A549 (cell line): ENCODE measurements at regions of chr5 and their contacts with region 1.

Region 1: DNA sequence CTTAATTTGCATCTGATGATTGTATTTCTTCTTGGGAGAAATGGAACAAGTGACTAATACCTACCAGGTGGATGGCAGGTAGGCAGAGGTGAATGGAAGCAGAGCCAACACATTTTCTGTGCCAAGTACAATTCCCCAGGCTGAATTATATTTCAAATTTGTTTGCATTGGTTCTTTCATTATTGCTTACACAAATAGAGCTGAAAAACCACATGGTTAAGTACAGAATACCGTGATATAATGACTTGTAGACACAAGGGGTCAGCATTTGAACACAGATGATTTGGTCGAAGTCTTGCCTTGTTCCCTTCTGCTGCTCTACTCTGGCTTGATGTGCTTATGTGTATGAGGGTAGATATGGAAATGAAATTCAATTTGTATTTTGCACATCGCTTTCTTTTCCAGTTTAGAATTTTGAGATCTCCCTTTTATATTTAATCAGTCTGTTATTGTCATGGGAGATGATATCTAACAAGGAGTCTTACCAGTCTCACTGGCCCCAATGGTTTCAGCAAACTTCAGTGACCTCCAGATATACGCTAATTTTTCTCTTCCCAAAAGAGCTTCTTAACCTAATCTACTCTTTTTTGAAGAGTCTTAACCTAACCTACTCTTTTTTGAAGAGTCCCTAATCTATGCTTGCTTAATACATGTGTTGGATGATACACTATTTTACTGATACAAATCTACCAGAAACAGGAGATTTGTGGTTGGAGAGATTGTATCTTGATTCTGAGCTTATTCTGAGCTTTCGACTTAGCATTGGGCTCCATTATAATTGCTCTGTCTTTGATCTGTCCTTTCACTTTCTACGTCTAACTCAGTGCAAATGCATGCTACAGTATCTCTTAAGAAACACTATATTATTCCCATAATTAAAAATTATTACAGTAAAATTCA is 88.1 kb downstream of the PCSK1 start:
- DNase-seq: peak; percentile 47 to 80
- ATAC-seq: peak; percentile 95 to 98
- H3K4me3 ChIP-seq: no peak overlapping the region
- H3K27ac ChIP-seq: peak overlapping the region; percentile 39 to 77
- H3K4me1 ChIP-seq: peaks cover 22% of the 10 kb centered on the region
- CTCF ChIP-seq: peak; percentile 94
- EP300 ChIP-seq: no peak
- POLR2A ChIP-seq: no peak
- RAD21 ChIP-seq: peak; percentile 92 to 97

Region 2: DNA sequence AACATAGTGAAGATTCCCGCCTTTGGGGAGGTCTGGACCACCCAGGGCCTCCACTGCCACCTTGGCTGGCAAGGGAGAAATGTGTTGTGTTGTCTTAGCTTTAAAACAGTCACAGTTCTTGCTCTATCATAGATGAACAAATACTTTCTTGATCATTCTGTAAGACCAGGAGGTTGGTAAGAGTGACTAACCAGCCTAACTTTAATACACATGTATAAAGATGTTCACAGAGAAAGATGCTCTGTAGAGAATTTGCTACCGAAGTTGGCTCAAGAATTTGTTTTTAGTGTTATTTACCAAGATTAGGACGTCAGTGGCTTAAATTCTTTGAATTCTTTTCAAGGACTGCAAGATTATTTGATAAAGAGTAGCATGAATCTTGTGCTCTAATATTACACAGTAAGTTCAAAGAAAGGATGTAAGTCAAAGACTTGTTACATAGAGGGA is 550.8 kb before region 1 on chr5:
- CTCF ChIA-PET with region 1: no interaction called
- POLR2A ChIA-PET with region 1: no interaction called
- DNase-seq: peak; percentile 8 to 76
- ATAC-seq: peak; percentile 86 to 92
- H3K4me3 ChIP-seq: no peak overlapping the region
- H3K27ac ChIP-seq: peak overlapping the region; percentile 79 to 83
- H3K4me1 ChIP-seq: peaks cover 70% of the 10 kb centered on the region
- CTCF ChIP-seq: no peak
- EP300 ChIP-seq: peak; percentile 69 to 83; a peak in 4 of 5 replicates
- POLR2A ChIP-seq: no peak
- RAD21 ChIP-seq: no peak; a peak in 1 of 5 replicates

Region 3: DNA sequence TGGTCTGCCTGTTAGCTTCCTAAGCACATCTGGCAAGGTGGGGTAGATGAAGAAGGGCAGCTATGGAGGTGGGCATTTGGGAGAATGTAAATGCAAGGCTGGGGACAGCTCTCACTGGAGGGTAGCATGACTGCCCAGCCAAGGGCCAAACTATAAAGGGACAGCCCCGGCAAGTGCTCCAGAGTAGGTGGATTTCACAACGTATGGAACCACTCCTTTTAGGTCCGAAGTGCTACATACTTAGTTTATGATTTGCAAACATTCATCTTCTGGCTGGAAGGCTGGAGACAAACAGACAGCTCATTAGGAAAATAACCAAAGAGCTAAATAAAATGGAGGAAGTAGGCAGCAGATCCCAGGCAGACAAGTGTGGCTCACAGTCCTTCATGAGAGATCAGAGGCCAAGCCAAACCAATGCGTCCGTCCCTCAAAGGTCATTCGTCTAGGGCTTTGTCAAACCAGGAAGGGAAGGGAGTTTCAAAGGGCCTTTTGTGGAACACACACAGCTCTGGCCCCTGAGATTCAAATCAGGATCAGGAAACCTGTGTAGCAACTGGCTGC is 479.9 kb before region 1 on chr5:
- CTCF ChIA-PET with region 1: interaction called, 127 read pairs
- POLR2A ChIA-PET with region 1: no interaction called
- DNase-seq: no peak
- ATAC-seq: no peak
- H3K4me3 ChIP-seq: no peak overlapping the region
- H3K27ac ChIP-seq: peak overlapping the region in 1 of 2 experiments; percentile 44; a peak in 1 of 6 replicates
- H3K4me1 ChIP-seq: peaks cover 48% of the 10 kb centered on the region
- CTCF ChIP-seq: no peak
- EP300 ChIP-seq: no peak
- POLR2A ChIP-seq: no peak
- RAD21 ChIP-seq: no peak

Region 4: DNA sequence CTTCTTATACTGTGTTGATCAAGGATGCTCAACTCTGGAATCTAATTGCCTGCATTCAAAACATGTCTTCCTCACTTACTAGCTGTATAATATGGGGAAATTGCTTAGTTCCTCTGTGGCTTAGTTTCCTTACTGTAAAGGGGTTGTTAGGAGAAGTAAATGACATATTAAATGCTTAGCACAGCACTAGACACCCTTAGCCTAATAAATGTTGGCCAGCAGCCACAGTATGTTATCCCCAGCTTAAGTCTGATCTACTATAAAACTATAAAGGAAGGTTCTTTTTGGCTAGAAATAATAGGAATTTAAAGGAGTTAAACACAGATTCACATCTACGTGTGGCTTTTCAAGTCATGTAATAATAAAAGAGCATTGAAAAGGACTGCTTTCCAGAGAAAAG is 144.3 kb before region 1 on chr5:
- CTCF ChIA-PET with region 1: no interaction called
- POLR2A ChIA-PET with region 1: no interaction called
- DNase-seq: no peak
- ATAC-seq: peak in 1 of 2 experiments; percentile 25; a peak in 2 of 6 replicates
- H3K4me3 ChIP-seq: no peak overlapping the region
- H3K27ac ChIP-seq: peak overlapping the region; percentile 73 to 81
- H3K4me1 ChIP-seq: peaks cover 35% of the 10 kb centered on the region
- CTCF ChIP-seq: no peak
- EP300 ChIP-seq: no peak
- POLR2A ChIP-seq: no peak
- RAD21 ChIP-seq: no peak

Region 5: DNA sequence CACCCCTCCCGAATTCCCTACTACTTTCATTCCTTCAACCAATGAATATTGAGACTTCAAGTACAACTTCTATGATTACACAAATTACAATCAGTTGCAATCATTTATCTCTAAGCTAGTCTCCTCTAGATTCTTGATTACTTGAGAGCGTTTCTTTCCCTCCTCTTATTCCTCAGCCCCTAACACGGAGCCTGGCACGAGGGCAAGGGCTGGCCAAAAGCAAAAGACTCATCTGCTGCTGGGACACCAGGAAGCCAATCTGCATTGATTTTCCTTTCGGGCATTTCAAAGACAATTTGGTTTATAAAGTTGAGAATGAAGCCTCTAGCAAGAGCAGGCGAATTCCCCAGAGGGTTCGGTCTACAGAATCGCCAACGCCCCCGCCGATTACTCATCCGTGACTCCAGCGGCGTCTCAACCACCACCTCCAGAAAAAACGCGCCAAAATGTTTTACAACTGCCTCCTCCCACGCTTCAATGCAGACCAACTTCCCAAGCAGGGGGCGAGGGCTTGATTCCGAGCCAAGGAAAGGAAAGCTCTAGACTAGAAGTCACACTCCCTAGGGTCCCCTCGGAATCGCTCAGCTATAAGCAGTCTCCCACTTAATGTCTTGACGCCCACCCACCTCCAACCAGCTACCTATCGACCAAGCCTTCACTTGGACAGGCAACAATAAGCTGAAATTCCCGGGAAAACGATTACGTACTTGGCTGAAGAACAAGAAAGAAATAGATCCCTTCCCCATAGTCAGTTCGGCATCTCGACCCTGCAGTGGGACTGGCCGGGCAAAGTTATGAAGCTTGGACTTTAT is 86.7 kb after region 1 on chr5:
- CTCF ChIA-PET with region 1: interaction called, 12 read pairs
- POLR2A ChIA-PET with region 1: no interaction called
- DNase-seq: no peak
- ATAC-seq: no peak
- H3K4me3 ChIP-seq: no peak overlapping the region
- H3K27ac ChIP-seq: no peak overlapping the region
- H3K4me1 ChIP-seq: peaks cover 9% of the 10 kb centered on the region
- CTCF ChIP-seq: no peak
- EP300 ChIP-seq: no peak
- POLR2A ChIP-seq: no peak
- RAD21 ChIP-seq: no peak

Region 6: GRCh38 chr5:96509721-96510333 is 164.9 kb after region 1 on chr5:
- CTCF ChIA-PET with region 1: interaction called, 10 read pairs
- POLR2A ChIA-PET with region 1: interaction called, 5 read pairs
- DNase-seq: peak; percentile 87 to 90
- ATAC-seq: peak; percentile 90 to 92
- H3K4me3 ChIP-seq: no peak overlapping the region
- H3K27ac ChIP-seq: peak overlapping the region; percentile 92 to 98
- H3K4me1 ChIP-seq: peaks cover 45% of the 10 kb centered on the region
- CTCF ChIP-seq: no peak
- EP300 ChIP-seq: peak; percentile 97 to 98
- POLR2A ChIP-seq: no peak
- RAD21 ChIP-seq: peak in 1 of 2 experiments; percentile 68; a peak in 3 of 5 replicates

Region 7: DNA sequence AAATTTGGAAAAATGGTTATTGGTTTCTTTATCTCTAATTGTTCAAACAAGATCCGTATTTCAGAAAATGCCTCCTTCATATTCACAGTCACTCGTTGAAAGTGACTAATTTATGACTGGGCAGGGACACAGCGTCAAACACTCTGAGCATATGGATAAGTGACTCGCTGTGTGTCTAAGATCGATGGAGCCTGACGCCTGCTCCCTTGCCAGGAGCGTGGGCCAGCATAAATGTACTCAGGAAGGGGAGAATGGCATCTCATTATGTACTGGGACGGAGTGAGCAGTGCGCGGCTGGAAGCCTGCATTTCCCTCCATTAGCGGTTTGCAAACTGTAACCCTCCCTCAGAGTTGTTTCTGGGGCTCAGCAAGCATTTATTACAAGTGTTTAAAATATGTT is 237.4 kb after region 1 on chr5:
- CTCF ChIA-PET with region 1: interaction called, 18 read pairs
- POLR2A ChIA-PET with region 1: no interaction called
- DNase-seq: no peak
- ATAC-seq: no peak; a peak in 1 of 6 replicates
- H3K4me3 ChIP-seq: no peak overlapping the region
- H3K27ac ChIP-seq: peak overlapping the region in 1 of 2 experiments; percentile 65; a peak in 1 of 6 replicates
- H3K4me1 ChIP-seq: peaks cover 14% of the 10 kb centered on the region; the same call in 1 of the 3 replicates
- CTCF ChIP-seq: no peak
- EP300 ChIP-seq: no peak
- POLR2A ChIP-seq: no peak
- RAD21 ChIP-seq: no peak

Region 8: GRCh38 chr5:96687812-96688453 is 343.0 kb after region 1 on chr5:
- CTCF ChIA-PET with region 1: interaction called, 19 read pairs
- POLR2A ChIA-PET with region 1: no interaction called
- DNase-seq: peak; percentile 72 to 79
- ATAC-seq: peak; percentile 88 to 95
- H3K4me3 ChIP-seq: peak overlapping the region; percentile 11; the same call in 1 of the 3 replicates
- H3K27ac ChIP-seq: peak overlapping the region in 1 of 2 experiments; percentile 47; a peak in 1 of 6 replicates
- H3K4me1 ChIP-seq: peaks cover 44% of the 10 kb centered on the region; the same call in 2 of the 3 replicates
- CTCF ChIP-seq: peak; percentile 79
- EP300 ChIP-seq: no peak
- POLR2A ChIP-seq: no peak
- RAD21 ChIP-seq: peak; percentile 85 to 88

Region 9: GRCh38 chr5:96734871-96735325 is 390.0 kb after region 1 on chr5:
- CTCF ChIA-PET with region 1: interaction called, 12 read pairs
- POLR2A ChIA-PET with region 1: no interaction called
- DNase-seq: no peak
- ATAC-seq: peak in 1 of 2 experiments; percentile 24; a peak in 1 of 6 replicates
- H3K4me3 ChIP-seq: no peak overlapping the region
- H3K27ac ChIP-seq: no peak overlapping the region
- H3K4me1 ChIP-seq: peaks cover 12% of the 10 kb centered on the region; the same call in 1 of the 3 replicates
- CTCF ChIP-seq: no peak
- EP300 ChIP-seq: no peak
- POLR2A ChIP-seq: no peak
- RAD21 ChIP-seq: no peak